Right cardiac atrium (tissue), 5 donors: ENCODE measurements at regions of chr1 and their contacts with region 1.

Region 1: GRCh38 chr1:167687919-167688519 is 33.8 kb upstream of the MPZL1 start:
- DNase-seq: peak in 2 of 3 donors; percentile 55 to 63
- ATAC-seq: peak; percentile 5 to 46
- H3K4me3 ChIP-seq: no peak overlapping the region
- H3K27ac ChIP-seq: no peak overlapping the region
- H3K4me1 ChIP-seq: peaks cover 12% of the 10 kb centered on the region
- H3K27me3 ChIP-seq: no peaks in the 10 kb centered on the region

Region 2: GRCh38 chr1:167555971-167556714 is 131.9 kb before region 1 on chr1:
- intact Hi-C with region 1: loop called in 1 of 4 experiments (anchors 5 kb)
- DNase-seq: peak; percentile 63 to 90 (median 80)
- ATAC-seq: peak in 1 of 2 donors; percentile 18
- H3K4me3 ChIP-seq: no peak overlapping the region
- H3K27ac ChIP-seq: no peak overlapping the region
- H3K4me1 ChIP-seq: peaks cover 4% of the 10 kb centered on the region
- H3K27me3 ChIP-seq: no peaks in the 10 kb centered on the region

Region 3: GRCh38 chr1:167599957-167600581 is 88.0 kb before region 1 on chr1:
- intact Hi-C with region 1: loop called (anchors 1 to 5 kb)
- DNase-seq: peak in 2 of 3 donors; percentile 30 to 60
- ATAC-seq: peak; percentile 67 to 77
- H3K4me3 ChIP-seq: no peak overlapping the region
- H3K27ac ChIP-seq: no peak overlapping the region
- H3K4me1 ChIP-seq: peaks cover 8% of the 10 kb centered on the region
- H3K27me3 ChIP-seq: no peaks in the 10 kb centered on the region

Region 4: GRCh38 chr1:167617153-167618147 is 70.6 kb before region 1 on chr1:
- intact Hi-C with region 1: no loop called
- DNase-seq: peak in 1 of 3 donors; percentile 65
- ATAC-seq: peak; percentile 87 to 89
- H3K4me3 ChIP-seq: no peak overlapping the region
- H3K27ac ChIP-seq: peak overlapping the region; percentile 16
- H3K4me1 ChIP-seq: peaks cover 7% of the 10 kb centered on the region
- H3K27me3 ChIP-seq: no peaks in the 10 kb centered on the region

Region 5: GRCh38 chr1:167629681-167630567 is 58.1 kb before region 1 on chr1 and contains the start of gene RCSD1:
- intact Hi-C with region 1: loop called (anchors 5 to 10 kb)
- DNase-seq: peak; percentile 47 to 86 (median 81)
- ATAC-seq: peak; percentile 78 to 84
- H3K4me3 ChIP-seq: peak within 1 kb of the TSS; percentile 65
- H3K27ac ChIP-seq: peak within 1 kb of the TSS; percentile 83
- H3K4me1 ChIP-seq: peaks cover 16% of the 10 kb centered on the region
- H3K27me3 ChIP-seq: no peaks in the 10 kb centered on the region
- total RNA-seq, gene RCSD1: 53.4 to 61.5 (median 58.2) TPM